AG04449 (cell line): ENCODE measurements at regions of chr2 and their contacts with region 1.

Region 1: GRCh38 chr2:109545828-109546713 is 67.7 kb downstream of the SEPTIN10 start:
- DNase-seq: no peak
- H3K4me3 ChIP-seq: no peak overlapping the region
- CTCF ChIP-seq: peak; percentile 89

Region 2: GRCh38 chr2:109209412-109209811 is 336.7 kb before region 1 on chr2:
- CTCF ChIA-PET with region 1: no interaction called
- POLR2A ChIA-PET with region 1: no interaction called
- DNase-seq: no peak
- H3K4me3 ChIP-seq: no peak overlapping the region
- CTCF ChIP-seq: no peak

Region 3: DNA sequence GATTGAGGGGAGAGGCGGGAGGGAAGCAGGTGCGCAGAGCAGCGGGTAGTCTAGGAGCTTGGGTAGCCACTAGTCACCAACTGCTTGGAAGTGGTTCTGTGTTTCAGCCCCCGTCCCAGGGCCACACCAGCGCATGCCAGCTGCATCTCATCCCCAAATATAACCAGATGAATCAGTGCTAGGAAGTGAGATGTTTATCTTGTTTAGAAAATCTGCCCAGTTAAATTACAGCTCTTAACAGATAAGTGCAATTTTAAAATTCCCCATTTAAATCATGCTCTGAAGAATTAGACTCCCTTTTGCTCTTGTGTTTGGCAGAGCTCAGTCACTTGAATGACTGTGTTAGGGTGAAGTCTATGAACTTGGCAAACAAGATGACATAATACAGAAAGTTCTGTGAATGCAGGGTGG is 126.1 kb before region 1 on chr2:
- CTCF ChIA-PET with region 1: no interaction called
- POLR2A ChIA-PET with region 1: no interaction called
- DNase-seq: no peak
- H3K4me3 ChIP-seq: no peak overlapping the region
- CTCF ChIP-seq: no peak

Region 4: DNA sequence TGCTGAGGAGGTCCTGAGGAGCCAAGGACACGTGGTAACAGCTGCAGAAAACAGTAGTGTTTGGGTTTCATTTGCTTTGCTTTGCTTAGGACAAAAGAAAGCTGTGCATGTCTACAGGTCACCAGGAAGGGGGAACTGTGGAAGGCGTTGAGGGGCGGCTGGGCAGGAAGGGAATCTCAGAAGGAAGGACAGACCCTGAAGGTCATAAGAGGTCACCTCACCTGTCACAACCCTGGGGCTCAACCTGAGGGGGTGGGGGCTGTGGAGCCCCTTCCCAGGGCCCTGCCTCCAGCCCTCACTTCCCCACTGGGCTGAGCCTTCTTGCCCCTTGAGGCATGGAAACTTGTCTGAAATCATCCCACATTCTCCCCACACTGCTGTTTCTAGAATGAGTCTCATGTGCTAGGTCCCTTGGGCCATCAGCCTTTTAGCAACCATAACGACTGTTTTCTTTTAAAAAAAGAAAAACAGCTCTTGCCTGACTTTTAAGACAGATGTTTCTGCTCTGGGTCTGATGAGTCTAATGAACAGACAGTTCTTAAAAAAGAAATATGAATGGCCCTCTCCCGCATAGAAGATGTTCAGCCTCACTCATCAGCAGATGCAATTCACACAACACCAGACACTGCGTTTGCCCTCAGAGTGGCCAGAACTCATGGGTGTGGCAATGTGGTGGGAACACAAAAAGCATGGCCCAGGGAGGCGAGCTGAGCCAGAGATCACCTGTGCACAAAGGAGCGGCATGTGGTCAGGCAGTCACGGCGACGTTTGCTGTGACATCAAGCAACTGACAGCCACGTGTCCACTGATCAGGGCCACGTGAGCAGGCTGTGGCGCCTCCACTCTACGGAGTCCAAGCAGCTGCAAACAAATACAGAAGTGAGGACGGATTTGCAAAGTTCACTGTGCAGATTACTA is 16.3 kb before region 1 on chr2:
- CTCF ChIA-PET with region 1: interaction called, 58 read pairs
- POLR2A ChIA-PET with region 1: no interaction called
- DNase-seq: no peak
- H3K4me3 ChIP-seq: no peak overlapping the region
- CTCF ChIP-seq: no peak

Region 5: GRCh38 chr2:109558076-109558882 is 12.2 kb after region 1 on chr2:
- CTCF ChIA-PET with region 1: interaction called, 131 read pairs
- POLR2A ChIA-PET with region 1: no interaction called
- DNase-seq: no peak
- H3K4me3 ChIP-seq: no peak overlapping the region
- CTCF ChIP-seq: no peak

Region 6: GRCh38 chr2:109601783-109602182 is 55.7 kb after region 1 on chr2:
- CTCF ChIA-PET with region 1: interaction called, 10 read pairs
- POLR2A ChIA-PET with region 1: interaction called, 3 read pairs
- DNase-seq: no peak
- H3K4me3 ChIP-seq: no peak overlapping the region
- CTCF ChIP-seq: no peak

Region 7: GRCh38 chr2:109613081-109613921 is 67.2 kb after region 1 on chr2:
- CTCF ChIA-PET with region 1: interaction called, 13 read pairs
- POLR2A ChIA-PET with region 1: interaction called, 3 read pairs
- DNase-seq: no peak
- H3K4me3 ChIP-seq: peak overlapping the region; percentile 74
- CTCF ChIP-seq: no peak

Region 8: DNA sequence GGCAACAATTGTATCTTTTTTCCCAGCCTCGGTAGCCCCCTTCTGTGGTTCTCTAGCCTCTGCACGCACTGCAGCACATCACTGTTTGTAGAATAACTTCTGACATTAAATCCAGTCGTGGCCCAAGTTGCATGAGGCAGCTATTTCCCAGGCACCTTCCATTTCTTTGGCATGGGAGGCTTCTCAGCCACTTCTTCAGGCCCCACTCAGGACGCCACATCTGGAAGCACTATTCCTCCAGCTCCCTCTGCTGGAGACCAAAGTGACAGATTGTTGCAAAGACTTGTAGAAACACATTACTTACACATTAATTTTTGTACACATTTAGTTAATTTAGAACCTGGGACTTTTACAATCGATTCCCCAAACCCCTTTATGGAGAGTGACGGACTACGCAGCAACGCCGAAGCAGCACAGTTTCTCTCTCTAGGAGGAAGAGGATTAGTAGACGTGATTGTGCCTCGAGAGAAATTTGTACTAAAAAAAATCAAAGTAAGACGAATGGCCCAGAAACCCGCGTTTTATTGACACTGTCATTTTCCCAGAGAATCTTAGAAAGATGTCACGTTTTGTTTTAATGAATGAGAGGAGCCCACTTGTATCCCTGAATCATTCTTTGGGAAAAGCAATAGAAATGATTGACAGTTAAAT is 190.2 kb after region 1 on chr2:
- CTCF ChIA-PET with region 1: interaction called, 308 read pairs
- POLR2A ChIA-PET with region 1: no interaction called
- DNase-seq: peak; percentile 12
- H3K4me3 ChIP-seq: no peak overlapping the region
- CTCF ChIP-seq: peak; percentile 59